ENCODE measurements at regions of chr10 and their contacts with region 1.

Region 1: DNA sequence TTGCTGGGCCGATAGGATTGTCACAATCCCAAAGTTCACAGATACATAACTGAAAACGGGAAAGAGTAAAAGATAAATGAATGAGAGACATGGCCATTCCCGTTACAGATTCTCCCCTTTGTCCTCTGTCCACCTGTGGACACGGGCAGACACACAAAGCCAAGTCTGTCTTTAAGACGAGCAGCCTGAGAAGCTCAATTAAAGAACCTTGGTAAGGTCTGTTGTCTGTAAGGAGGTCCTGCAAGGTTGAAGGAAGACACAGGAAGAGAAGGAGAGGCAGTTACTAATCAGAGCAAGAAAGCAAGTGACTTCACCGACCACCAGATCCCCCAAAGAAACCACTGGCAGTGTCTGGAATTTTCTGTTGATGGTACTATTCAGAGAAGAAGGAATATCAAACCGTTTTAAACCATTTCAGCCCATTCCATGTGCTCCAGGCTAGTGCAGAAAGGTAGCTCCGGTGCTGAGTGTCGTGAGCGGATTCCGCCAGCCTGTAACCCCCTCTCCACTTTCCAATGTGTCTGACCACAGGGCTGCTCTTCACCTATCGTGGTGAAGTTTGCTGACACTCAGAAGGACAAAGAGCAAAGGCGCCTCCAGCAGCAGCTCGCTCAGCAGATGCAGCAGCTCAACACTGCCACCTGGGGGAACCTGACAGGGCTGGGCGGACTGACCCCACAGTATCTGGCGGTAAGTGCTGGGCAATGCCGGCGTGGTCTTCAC is 252.6 kb downstream of the CELF2 start:
- DNase-seq: peak; percentile 78 to 89 (median 86)
- H3K4me3 ChIP-seq: no peak overlapping the region
- H3K27ac ChIP-seq: peak overlapping the region in 1 of 2 donors; percentile 37
- H3K4me1 ChIP-seq: peaks cover 8% of the 10 kb centered on the region
- H3K27me3 ChIP-seq: no peaks in the 10 kb centered on the region
- CTCF ChIP-seq: peak; percentile 67 to 86 (median 84)
- EP300 ChIP-seq: no peak
- POLR2A ChIP-seq: no peak

Region 2: GRCh38 chr10:9342885-9343570 is 1927.3 kb before region 1 on chr10:
- intact Hi-C with region 1: loop called in 1 of 4 experiments (anchors 5 kb)
- DNase-seq: no peak
- H3K4me3 ChIP-seq: no peak overlapping the region
- H3K27ac ChIP-seq: no peak overlapping the region
- H3K4me1 ChIP-seq: no peaks in the 10 kb centered on the region
- H3K27me3 ChIP-seq: peaks cover 2% of the 10 kb centered on the region
- CTCF ChIP-seq: peak in 2 of 3 donors; percentile 21 to 57
- EP300 ChIP-seq: no peak
- POLR2A ChIP-seq: no peak

Region 3: DNA sequence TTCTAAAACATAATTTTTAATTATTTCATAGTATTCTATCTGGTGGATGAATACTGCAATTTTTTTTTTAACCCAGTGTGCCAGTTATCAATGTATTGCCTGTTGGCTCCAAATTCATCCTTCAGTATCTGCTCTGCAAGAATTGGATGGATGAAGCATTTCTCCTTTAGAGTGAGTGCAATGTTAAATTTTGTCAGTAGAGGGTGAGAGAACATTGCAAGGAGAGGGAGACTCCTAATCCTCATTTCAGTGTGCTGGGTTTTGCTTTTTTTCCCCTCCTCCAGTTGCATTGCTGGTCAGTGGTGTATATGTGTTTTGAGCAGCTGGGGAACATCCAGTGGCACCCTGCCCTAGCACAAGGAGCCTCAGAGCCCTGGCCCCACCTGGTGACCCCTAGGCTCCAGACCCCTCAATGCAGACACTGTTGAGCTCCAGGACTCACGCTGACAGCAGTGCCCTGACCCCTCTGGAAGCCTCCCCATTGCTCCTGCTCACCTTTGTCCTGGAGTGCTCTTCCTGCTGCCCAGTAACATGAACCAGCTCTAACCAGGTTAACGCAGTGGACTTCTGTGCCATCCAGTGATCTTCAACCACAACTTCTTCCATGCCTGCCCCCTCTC is 141.7 kb after region 1 on chr10:
- intact Hi-C with region 1: no loop called
- DNase-seq: no peak
- H3K4me3 ChIP-seq: no peak overlapping the region
- H3K27ac ChIP-seq: no peak overlapping the region
- H3K4me1 ChIP-seq: no peaks in the 10 kb centered on the region
- H3K27me3 ChIP-seq: no peaks in the 10 kb centered on the region
- CTCF ChIP-seq: no peak
- EP300 ChIP-seq: no peak
- POLR2A ChIP-seq: no peak